Caco-2 (cell line): ENCODE measurements at regions of chr12 and their contacts with region 1.

Region 1: GRCh38 chr12:77049767-77050353 is 15.5 kb downstream of the E2F7 start:
- DNase-seq: peak in 1 of 2 experiments; percentile 61
- H3K4me3 ChIP-seq: no peak overlapping the region
- H3K4me3 Mint-ChIP-seq: no peak overlapping the region
- H3K27ac Mint-ChIP-seq: no peak overlapping the region
- H3K4me1 ChIP-seq: no peaks in the 10 kb centered on the region
- H3K4me1 Mint-ChIP-seq: no peaks in the 10 kb centered on the region
- H3K27me3 ChIP-seq: no peaks in the 10 kb centered on the region
- H3K27me3 Mint-ChIP-seq: no peaks in the 10 kb centered on the region
- CTCF ChIP-seq: peak; percentile 47 to 69

Region 2: GRCh38 chr12:76611533-76611932 is 438.3 kb before region 1 on chr12:
- CTCF ChIA-PET with region 1: no interaction called
- POLR2A ChIA-PET with region 1: no interaction called
- intact Hi-C with region 1: no loop called
- DNase-seq: no peak
- H3K4me3 ChIP-seq: no peak overlapping the region
- H3K4me3 Mint-ChIP-seq: no peak overlapping the region
- H3K27ac Mint-ChIP-seq: no peak overlapping the region
- H3K4me1 ChIP-seq: no peaks in the 10 kb centered on the region
- H3K4me1 Mint-ChIP-seq: no peaks in the 10 kb centered on the region
- H3K27me3 ChIP-seq: no peaks in the 10 kb centered on the region
- H3K27me3 Mint-ChIP-seq: no peaks in the 10 kb centered on the region
- CTCF ChIP-seq: no peak

Region 3: GRCh38 chr12:77065361-77066204 is 15.7 kb after region 1 on chr12 and contains the start of gene E2F7:
- CTCF ChIA-PET with region 1: no interaction called
- POLR2A ChIA-PET with region 1: no interaction called
- intact Hi-C with region 1: loop called (anchors 1 kb)
- DNase-seq: peak; percentile 95 to 96
- H3K4me3 ChIP-seq: peak within 1 kb of the TSS; percentile 82
- H3K4me3 Mint-ChIP-seq: peak within 1 kb of the TSS; percentile 70
- H3K27ac Mint-ChIP-seq: peak within 1 kb of the TSS; percentile 80
- H3K4me1 ChIP-seq: 0 out of 2 replicates have a peak, but pooled peaks cover 7% of the 10 kb centered on the region
- H3K4me1 Mint-ChIP-seq: no peaks in the 10 kb centered on the region
- H3K27me3 ChIP-seq: no peaks in the 10 kb centered on the region
- H3K27me3 Mint-ChIP-seq: peaks cover 8% of the 10 kb centered on the region
- CTCF ChIP-seq: no peak
- total RNA-seq, gene E2F7: 11.4 and 11.6 TPM in 2 replicates

Region 4: DNA sequence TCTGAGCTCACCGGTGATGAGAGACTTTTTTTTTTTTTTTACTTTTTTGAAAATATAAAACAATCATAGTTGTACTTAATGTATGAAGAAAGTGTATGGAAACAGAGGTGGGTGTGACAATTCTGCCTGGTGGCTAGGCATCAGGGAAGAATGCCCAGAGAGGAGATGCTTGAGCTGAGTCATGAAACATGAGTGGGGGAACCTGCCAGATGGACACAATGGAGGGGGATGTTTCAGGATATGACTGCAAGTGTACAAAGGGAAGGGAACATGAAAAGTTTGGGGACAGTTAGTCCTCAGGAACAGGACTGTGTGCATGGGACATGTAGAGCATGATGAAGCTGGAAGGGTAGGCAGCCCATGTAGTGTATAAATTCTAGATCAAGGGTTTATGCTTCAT is 289.8 kb after region 1 on chr12:
- CTCF ChIA-PET with region 1: no interaction called
- POLR2A ChIA-PET with region 1: no interaction called
- intact Hi-C with region 1: loop called (anchors 10 kb)
- DNase-seq: no peak
- H3K4me3 ChIP-seq: no peak overlapping the region
- H3K4me3 Mint-ChIP-seq: no peak overlapping the region
- H3K27ac Mint-ChIP-seq: no peak overlapping the region
- H3K4me1 ChIP-seq: no peaks in the 10 kb centered on the region
- H3K4me1 Mint-ChIP-seq: no peaks in the 10 kb centered on the region
- H3K27me3 ChIP-seq: no peaks in the 10 kb centered on the region; the same call in 1 of the 2 replicates
- H3K27me3 Mint-ChIP-seq: peaks cover 7% of the 10 kb centered on the region
- CTCF ChIP-seq: no peak